ENCODE measurements at regions of chrX and their contacts with region 1.

Region 1: DNA sequence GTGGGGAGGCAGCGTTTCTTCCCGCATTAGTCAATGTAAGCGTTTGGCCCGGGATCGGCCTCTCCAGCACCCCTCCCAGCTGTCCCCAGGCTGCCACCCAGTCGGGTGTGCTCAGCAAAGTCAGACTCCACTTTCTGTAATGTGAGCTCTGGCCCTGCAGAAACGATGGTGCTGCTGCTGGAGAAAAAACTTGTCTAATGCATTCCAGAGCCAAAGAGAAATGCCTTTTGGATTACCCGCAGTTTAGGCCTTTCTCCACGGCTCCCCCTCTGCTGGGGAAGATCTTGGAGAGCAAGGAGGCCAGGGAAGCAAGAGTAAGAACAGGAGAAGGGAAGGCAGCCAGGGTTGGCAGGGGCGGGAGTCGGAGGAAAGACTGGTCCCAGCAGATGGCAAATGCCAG is 55.2 kb downstream of the ELF4 start:
- DNase-seq: no peak
- H3K4me3 ChIP-seq: no peak overlapping the region
- H3K27ac ChIP-seq: no peak overlapping the region
- H3K4me1 ChIP-seq: no peaks in the 10 kb centered on the region
- H3K27me3 ChIP-seq: no peaks in the 10 kb centered on the region
- CTCF ChIP-seq: no peak
- EP300 ChIP-seq: no peak
- POLR2A ChIP-seq: no peak

Region 2: GRCh38 chrX:129606918-129607317 is 448.2 kb before region 1 on chrX:
- intact Hi-C with region 1: loop called in 2 of 4 experiments (anchors 5 kb)
- DNase-seq: peak; percentile 45 to 75 (median 57)
- H3K4me3 ChIP-seq: no peak overlapping the region
- H3K27ac ChIP-seq: no peak overlapping the region
- H3K4me1 ChIP-seq: peaks cover 3% of the 10 kb centered on the region
- H3K27me3 ChIP-seq: no peaks in the 10 kb centered on the region
- CTCF ChIP-seq: peak; percentile 46 to 75 (median 75)
- EP300 ChIP-seq: no peak
- POLR2A ChIP-seq: no peak

Region 3: GRCh38 chrX:129957241-129958082 is 97.6 kb before region 1 on chrX:
- intact Hi-C with region 1: no loop called
- DNase-seq: peak; percentile 59 to 75 (median 62)
- H3K4me3 ChIP-seq: peak overlapping the region; percentile 36
- H3K27ac ChIP-seq: peak overlapping the region in 1 of 2 donors; percentile 72
- H3K4me1 ChIP-seq: no peaks in the 10 kb centered on the region
- H3K27me3 ChIP-seq: no peaks in the 10 kb centered on the region
- CTCF ChIP-seq: no peak
- EP300 ChIP-seq: no peak
- POLR2A ChIP-seq: no peak

Region 4: GRCh38 chrX:129996120-129996519 is 59.0 kb before region 1 on chrX:
- intact Hi-C with region 1: no loop called
- DNase-seq: no peak
- H3K4me3 ChIP-seq: no peak overlapping the region
- H3K27ac ChIP-seq: no peak overlapping the region
- H3K4me1 ChIP-seq: no peaks in the 10 kb centered on the region
- H3K27me3 ChIP-seq: no peaks in the 10 kb centered on the region
- CTCF ChIP-seq: no peak
- EP300 ChIP-seq: no peak
- POLR2A ChIP-seq: no peak

Region 5: GRCh38 chrX:130091958-130092522 is 36.9 kb after region 1 on chrX:
- intact Hi-C with region 1: no loop called
- DNase-seq: no peak
- H3K4me3 ChIP-seq: no peak overlapping the region
- H3K27ac ChIP-seq: no peak overlapping the region
- H3K4me1 ChIP-seq: peaks cover 8% of the 10 kb centered on the region
- H3K27me3 ChIP-seq: no peaks in the 10 kb centered on the region
- CTCF ChIP-seq: no peak
- EP300 ChIP-seq: no peak
- POLR2A ChIP-seq: no peak

Region 6: GRCh38 chrX:130216320-130216719 is 161.2 kb after region 1 on chrX:
- intact Hi-C with region 1: no loop called
- DNase-seq: no peak
- H3K4me3 ChIP-seq: no peak overlapping the region
- H3K27ac ChIP-seq: no peak overlapping the region
- H3K4me1 ChIP-seq: no peaks in the 10 kb centered on the region
- H3K27me3 ChIP-seq: no peaks in the 10 kb centered on the region
- CTCF ChIP-seq: no peak
- EP300 ChIP-seq: no peak
- POLR2A ChIP-seq: no peak